ENCODE measurements at regions of chr18 and their contacts with region 1.

Region 1: DNA sequence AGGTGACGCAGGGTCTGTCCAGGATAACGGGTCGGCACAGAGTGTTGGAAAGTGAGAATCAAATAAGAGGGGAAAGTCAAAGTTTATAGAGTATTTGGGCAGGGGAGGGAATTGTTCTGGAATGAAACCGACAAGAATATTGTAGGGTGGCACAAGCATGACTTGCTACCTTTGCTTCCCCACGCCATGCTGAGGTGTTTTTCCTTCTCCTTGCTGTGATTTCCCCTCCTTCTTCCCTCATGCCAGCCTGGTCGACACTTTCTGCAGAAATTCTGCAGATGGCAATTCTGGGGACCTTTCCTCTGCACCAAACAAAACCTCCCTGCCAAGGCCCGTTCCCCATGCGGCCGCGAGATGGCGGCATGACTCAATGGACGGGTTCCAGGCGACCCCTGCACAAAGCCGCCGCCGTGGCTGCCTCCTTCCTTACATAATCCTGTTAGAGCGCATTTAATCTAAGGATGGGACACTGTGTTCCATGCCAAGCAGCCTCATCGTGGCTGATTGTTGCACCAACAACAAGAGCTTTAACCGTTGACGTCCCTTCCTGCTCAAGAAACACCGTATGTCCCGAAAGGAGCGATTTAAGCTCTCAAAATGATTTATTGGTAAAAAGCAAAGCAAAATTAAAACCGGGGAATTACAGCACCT is at the start of gene MRO:
- DNase-seq: peak; percentile 75 to 83
- ATAC-seq: peak; percentile 82 to 88
- H3K4me3 ChIP-seq: peak within 1 kb of the TSS; percentile 42 to 51 (median 50)
- H3K27ac ChIP-seq: peak within 1 kb of the TSS; percentile 53 to 69 (median 64)
- H3K4me1 ChIP-seq: peaks cover 22 to 25% of the 10 kb centered on the region in 2 donors
- H3K27me3 ChIP-seq: no peaks in the 10 kb centered on the region
- CTCF ChIP-seq: peak; percentile 77 to 93 (median 91)
- POLR2A ChIP-seq: no peak
- total RNA-seq, gene MRO: 0.18 to 1.4 (median 0.49) TPM in 3 of 4 donors, not detected in the other

Region 2: GRCh38 chr18:50769463-50769862 is 50.4 kb before region 1 on chr18:
- in situ Hi-C with region 1: no loop called
- intact Hi-C with region 1: no loop called
- DNase-seq: no peak
- ATAC-seq: no peak
- H3K4me3 ChIP-seq: no peak overlapping the region
- H3K27ac ChIP-seq: no peak overlapping the region
- H3K4me1 ChIP-seq: no peaks in the 10 kb centered on the region
- H3K27me3 ChIP-seq: no peaks in the 10 kb centered on the region
- CTCF ChIP-seq: no peak
- POLR2A ChIP-seq: no peak

Region 3: DNA sequence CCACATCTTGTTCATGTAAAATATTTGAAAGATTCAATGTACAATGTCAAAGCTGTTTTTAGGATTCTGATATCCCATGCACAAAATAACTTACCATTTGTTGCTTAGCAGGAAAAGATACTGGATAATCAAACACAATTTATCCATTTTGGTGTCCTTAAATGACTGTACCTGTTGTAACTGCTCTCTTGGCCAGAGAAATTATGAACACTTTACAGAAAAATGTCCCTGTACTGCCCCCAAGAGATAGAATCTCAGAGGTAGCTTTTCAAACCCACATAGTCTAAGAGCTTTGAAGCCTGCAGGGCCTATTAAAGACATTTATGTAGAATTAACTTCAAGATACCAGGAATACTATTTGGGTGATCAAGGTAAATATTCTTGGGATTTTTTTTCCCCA is 46.9 kb after region 1 on chr18:
- in situ Hi-C with region 1: loop called in 2 of 4 experiments (anchors 5 kb)
- intact Hi-C with region 1: loop called (anchors 1 kb)
- DNase-seq: no peak
- ATAC-seq: peak; percentile 66 to 71
- H3K4me3 ChIP-seq: no peak overlapping the region
- H3K27ac ChIP-seq: peak overlapping the region in 1 of 4 donors; percentile 29
- H3K4me1 ChIP-seq: peaks cover 11 to 16% of the 10 kb centered on the region in 2 donors
- H3K27me3 ChIP-seq: no peaks in the 10 kb centered on the region
- CTCF ChIP-seq: peak in 1 of 5 experiments; percentile 33
- POLR2A ChIP-seq: no peak

Region 4: DNA sequence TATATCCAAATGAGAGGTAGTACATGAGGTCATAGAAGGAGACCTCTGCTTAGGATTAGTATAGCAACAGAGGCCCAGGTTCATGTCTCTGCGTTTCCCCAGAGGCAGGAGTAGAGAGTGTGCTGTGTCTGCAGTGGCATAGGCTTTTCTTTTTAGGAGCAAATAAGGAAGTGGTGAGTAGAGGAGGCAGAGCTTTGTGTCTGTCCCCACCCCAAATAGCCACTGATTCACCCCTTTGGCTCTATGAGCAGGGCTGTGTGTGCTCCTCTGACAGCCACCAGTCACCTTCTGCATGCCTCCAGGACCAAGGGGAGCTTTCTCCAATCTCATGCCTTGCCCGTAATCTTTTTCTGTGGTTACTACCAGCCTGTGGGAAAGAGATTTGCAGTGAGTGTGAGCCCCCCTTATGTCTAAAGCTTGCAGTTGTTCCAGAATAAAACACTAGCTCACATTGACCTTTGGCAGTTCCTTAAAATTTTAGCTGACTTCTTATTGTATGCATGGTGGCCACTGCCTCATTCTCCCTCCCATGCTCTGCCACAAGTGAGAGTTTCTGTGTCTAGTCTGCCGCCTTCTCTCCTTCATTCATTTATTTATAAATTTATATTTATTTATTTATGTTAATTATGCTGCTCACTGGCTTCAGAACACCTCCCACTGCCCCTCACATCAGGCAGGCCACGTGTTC is 124.5 kb after region 1 on chr18:
- in situ Hi-C with region 1: no loop called
- intact Hi-C with region 1: no loop called
- DNase-seq: no peak
- ATAC-seq: peak; percentile 42 to 70
- H3K4me3 ChIP-seq: no peak overlapping the region
- H3K27ac ChIP-seq: no peak overlapping the region
- H3K4me1 ChIP-seq: no peaks in the 10 kb centered on the region
- H3K27me3 ChIP-seq: no peaks in the 10 kb centered on the region
- CTCF ChIP-seq: no peak
- POLR2A ChIP-seq: no peak

Region 5: GRCh38 chr18:50973367-50974126 is 153.7 kb after region 1 on chr18:
- in situ Hi-C with region 1: no loop called
- intact Hi-C with region 1: loop called (anchors 5 kb)
- DNase-seq: peak; percentile 64 to 67
- ATAC-seq: peak; percentile 95 to 96
- H3K4me3 ChIP-seq: no peak overlapping the region
- H3K27ac ChIP-seq: peak overlapping the region; percentile 81 to 98 (median 87)
- H3K4me1 ChIP-seq: peaks cover 34 to 37% of the 10 kb centered on the region in 2 donors
- H3K27me3 ChIP-seq: no peaks in the 10 kb centered on the region
- CTCF ChIP-seq: no peak
- POLR2A ChIP-seq: peak in 1 of 2 donors; percentile 36

Region 6: GRCh38 chr18:51039138-51040112 is 219.6 kb after region 1 on chr18:
- in situ Hi-C with region 1: loop called in 1 of 4 experiments (anchors 10 kb)
- intact Hi-C with region 1: no loop called
- DNase-seq: no peak
- ATAC-seq: no peak
- H3K4me3 ChIP-seq: no peak overlapping the region
- H3K27ac ChIP-seq: peak overlapping the region in 2 of 4 donors; percentile 5 to 28
- H3K4me1 ChIP-seq: peaks cover 82 to 88% of the 10 kb centered on the region in 2 donors
- H3K27me3 ChIP-seq: no peaks in the 10 kb centered on the region
- CTCF ChIP-seq: no peak
- POLR2A ChIP-seq: no peak

Measured in gastrocnemius medialis (tissue), 4 donors.